ENCODE measurements at regions of chr9 and their contacts with region 1.

Region 1: GRCh38 chr9:33452828-33453271 is 5.5 kb upstream of the AQP3 start:
- DNase-seq: peak; percentile 68
- CTCF ChIP-seq: peak; percentile 62

Region 2: DNA sequence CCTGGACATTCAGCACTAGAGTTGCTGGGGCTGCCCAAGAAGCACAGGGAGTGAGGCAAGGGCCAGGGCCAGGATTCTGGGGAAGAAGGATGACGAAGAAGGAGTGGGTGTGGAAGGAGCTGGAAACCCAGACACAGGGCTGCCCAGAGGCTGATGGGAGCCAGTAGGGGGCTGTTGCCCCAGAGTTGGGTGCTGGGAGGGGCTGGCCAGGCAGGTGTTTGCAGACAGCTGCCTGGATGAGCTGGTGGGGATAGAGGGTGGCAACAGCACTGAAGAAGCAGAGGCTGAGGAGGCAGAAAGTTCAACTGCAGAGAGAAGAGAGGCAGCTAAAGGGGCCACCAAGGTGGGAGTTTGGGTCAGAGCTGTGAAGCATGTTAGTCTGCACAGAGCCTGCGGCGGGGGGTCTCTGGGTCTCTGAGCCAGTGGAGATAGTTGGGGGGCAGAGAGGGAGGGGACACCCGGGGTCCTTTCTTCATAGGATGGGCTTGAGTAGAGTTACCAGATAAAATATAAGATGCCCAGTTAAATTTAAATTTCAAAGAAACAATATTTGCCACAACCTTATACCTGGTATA is 48.0 kb before region 1 on chr9:
- CTCF ChIA-PET with region 1: interaction called, 19 read pairs
- POLR2A ChIA-PET with region 1: no interaction called
- DNase-seq: no peak
- CTCF ChIP-seq: no peak

Region 3: GRCh38 chr9:33436440-33436839 is 16.4 kb before region 1 on chr9:
- CTCF ChIA-PET with region 1: interaction called, 30 read pairs
- POLR2A ChIA-PET with region 1: no interaction called
- DNase-seq: no peak
- CTCF ChIP-seq: no peak

Region 4: DNA sequence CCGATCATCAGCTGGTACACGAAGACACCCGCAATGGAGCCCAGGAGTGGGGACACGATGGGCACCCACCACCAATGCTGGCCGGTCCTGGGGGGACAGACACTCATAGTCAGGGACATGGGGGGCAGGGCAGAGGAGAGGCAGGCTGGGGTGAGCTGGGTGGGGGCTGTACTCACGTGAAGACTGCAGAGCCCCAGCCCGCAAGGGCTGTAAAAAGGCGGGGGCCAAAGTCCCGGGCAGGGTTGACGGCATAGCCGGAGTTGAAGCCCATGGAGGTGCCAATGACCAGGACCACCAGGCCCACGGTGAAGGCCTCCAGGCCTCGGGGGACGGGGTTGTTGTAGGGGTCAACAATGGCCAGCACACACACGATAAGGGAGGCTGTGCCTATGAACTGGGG is 10.7 kb before region 1 on chr9:
- CTCF ChIA-PET with region 1: interaction called, 30 read pairs
- POLR2A ChIA-PET with region 1: no interaction called
- DNase-seq: no peak
- CTCF ChIP-seq: no peak

Region 5: DNA sequence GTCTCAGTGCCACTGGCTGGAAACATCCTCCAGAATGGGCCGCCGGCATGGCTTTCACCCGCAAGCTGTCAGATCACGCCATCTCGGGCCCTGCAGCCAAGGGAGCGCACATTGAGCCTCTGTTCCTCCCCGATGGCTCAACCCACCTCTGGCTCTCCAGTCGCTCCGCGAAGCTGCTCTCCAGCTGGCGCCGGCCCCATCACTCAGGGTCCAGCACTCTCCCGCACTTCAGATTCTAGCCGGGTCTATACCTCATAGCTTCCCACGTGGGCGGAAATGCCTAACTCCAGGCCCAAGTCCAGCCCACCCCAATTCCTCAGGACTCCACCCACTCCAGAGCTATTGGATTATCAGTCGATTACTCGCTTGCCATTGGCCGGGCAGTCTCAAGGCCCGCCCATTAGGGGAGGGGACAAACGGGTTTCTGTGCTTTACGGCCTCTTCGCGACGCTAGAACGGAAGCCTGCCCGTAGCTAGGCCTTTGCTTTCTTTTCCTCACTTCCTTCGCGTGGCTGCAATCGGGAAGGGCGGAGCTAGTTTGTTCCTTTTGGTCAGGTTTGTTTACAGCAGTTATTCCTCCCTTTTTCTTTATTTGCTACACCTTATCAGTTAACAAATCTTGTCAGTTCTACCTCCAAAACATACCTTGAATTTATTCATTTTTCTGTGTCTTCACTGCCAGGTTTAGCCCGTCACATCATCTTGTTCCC is 20.9 kb after region 1 on chr9 and contains the start of gene NOL6:
- CTCF ChIA-PET with region 1: interaction called, 174 read pairs
- POLR2A ChIA-PET with region 1: interaction called, 3 read pairs
- DNase-seq: peak; percentile 98
- CTCF ChIP-seq: no peak